ENCODE measurements at regions of chr4 and their contacts with region 1.

Region 1: GRCh38 chr4:57064811-57065711 is 45.1 kb downstream of the IGFBP7 start:
- DNase-seq: peak; percentile 87
- H3K4me3 ChIP-seq: peak overlapping the region in 1 of 3 experiments; percentile 15
- H3K27ac ChIP-seq: peak overlapping the region; percentile 65
- H3K4me1 ChIP-seq: peaks cover 33% of the 10 kb centered on the region
- H3K27me3 ChIP-seq: no peaks in the 10 kb centered on the region
- CTCF ChIP-seq: no peak
- POLR2A ChIP-seq: no peak

Region 2: DNA sequence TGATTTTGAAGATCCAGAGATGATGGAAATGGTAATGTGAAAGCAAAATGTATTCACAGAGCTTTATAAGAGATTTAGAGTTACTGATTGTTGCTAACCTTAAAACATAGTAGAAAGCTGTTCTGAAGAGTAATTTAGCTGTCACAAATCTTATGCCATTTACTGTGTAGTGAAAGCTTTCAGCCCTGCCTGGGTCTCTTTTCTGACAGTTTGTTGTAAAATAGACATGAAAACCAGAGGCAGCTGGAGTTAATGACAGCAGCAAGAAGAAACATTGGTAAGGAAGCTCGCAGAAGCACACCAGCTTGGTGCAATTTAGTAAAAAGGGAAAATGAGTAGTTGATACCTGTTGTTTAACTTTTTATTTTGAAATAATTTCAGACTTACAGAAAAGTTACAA is 65.3 kb before region 1 on chr4:
- CTCF ChIA-PET with region 1: no interaction called
- POLR2A ChIA-PET with region 1: no interaction called
- dilution Hi-C with region 1: no loop called
- intact Hi-C with region 1: no loop called
- DNase-seq: no peak
- H3K4me3 ChIP-seq: no peak overlapping the region
- H3K27ac ChIP-seq: no peak overlapping the region
- H3K4me1 ChIP-seq: peaks cover 5% of the 10 kb centered on the region
- H3K27me3 ChIP-seq: no peaks in the 10 kb centered on the region
- CTCF ChIP-seq: no peak
- POLR2A ChIP-seq: no peak

Region 3: DNA sequence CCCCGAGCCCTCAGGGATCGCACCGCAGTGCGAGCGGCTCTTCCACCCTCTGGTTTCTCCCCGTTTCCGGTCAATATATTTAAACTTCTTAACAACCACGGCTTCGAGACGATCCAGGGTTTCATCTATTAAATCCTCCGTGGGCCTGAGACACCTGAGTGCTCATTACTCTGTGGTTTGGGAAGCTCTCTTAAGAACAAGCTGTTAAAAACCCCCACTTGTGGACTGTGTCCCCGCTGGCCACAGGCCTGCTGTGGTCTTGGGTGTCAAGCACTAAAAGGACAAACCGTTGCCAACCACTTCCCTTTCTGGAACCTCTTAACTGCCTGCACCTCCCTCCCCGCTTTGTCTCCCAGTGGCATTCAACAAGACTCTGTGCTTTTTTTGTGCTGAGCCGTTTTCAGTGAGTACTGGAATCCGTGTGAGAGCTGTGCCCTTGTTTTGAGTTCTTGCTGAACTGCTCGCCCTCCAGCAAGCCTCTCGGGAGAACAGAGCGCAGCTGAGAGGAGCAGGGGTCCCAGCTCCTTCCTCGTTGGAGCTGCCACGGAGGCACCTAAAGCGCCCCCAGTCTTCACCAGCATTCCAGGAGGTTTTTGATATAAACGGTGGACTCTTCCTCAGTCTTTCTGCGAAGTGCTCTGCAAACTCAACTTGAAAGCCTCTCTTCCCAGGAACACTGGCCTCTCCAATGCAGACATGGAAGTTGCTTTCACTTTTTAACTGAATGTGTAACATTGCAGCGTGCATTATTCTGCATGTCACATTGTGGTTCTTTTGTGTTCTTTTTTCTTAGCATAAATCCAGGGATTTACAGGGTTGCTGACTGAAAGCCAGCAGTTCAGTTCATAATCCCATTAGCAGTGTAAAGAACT is 45.8 kb after region 1 on chr4:
- CTCF ChIA-PET with region 1: interaction called, 3 read pairs
- POLR2A ChIA-PET with region 1: no interaction called
- dilution Hi-C with region 1: no loop called
- intact Hi-C with region 1: loop called (anchors 1 kb)
- DNase-seq: peak; percentile 82
- H3K4me3 ChIP-seq: peak overlapping the region; percentile 20 to 85 (median 52)
- H3K27ac ChIP-seq: peak overlapping the region; percentile 54
- H3K4me1 ChIP-seq: peaks cover 21% of the 10 kb centered on the region
- H3K27me3 ChIP-seq: no peaks in the 10 kb centered on the region
- CTCF ChIP-seq: no peak
- POLR2A ChIP-seq: no peak

Measured in endothelial cell of umbilical vein (primary cell).